Naive thymus-derived CD8-positive, alpha-beta T cell (primary cell): ENCODE measurements at regions of chr17 and their contacts with region 1.

Region 1: DNA sequence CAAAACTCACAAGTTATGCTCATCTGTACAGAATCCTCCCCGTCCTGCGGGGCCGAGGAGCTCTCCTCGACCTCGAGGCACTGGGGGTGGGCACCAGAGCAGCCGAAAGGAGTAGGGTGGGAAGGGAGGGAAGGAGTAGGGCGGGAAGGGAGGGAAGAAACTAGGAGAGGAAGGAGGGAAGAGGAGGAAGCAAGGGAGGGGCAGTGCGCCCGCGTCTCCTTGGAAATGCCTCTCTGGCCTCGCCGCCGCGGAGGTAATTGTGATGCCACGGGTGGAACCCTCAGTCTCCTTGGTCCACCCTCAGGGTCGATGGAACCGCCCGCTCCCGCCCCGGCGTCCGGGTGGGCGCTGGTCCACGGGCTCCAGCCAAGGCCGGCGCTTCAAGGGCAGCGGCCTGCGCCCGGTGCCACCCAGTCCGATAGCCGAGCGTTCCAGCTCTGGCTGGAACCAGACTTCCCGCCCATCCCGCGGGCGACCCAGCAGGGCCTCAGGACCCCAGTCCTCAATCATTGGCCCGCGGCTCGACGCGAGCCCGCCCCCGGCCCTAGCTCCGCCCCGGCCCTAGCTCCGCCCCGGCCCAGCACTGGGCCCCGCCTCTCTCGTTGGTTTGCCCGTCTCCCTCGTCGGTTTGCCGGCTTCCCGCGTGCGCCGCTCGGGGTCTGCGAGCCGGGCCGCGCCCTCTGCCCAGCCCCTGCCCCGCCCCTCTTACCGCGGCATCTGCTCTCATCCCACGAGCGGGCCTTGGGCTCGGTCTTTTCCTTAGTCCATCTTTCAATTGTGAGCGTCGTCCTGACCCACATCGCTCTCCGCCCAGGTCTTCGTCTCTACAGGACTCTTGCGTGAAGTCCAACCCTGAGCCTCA is 596 bp downstream of the PROCA1 start:
- DNase-seq: peak; percentile 82 to 92 (median 88)
- ATAC-seq: peak; percentile 88 to 89
- H3K4me3 Mint-ChIP-seq: peak overlapping the region; percentile 84 to 95 (median 92)
- H3K27ac Mint-ChIP-seq: peak overlapping the region; percentile 85 to 97 (median 95)
- H3K4me1 Mint-ChIP-seq: peaks cover 3 to 20% (median 15%) of the 10 kb centered on the region in 4 donors
- H3K27me3 Mint-ChIP-seq: peaks cover 0 to 18% (median 10%) of the 10 kb centered on the region in 5 donors

Region 2: GRCh38 chr17:28661635-28662537 is 49.2 kb before region 1 on chr17 and contains the starts of genes SDF2 and SUPT6H:
- POLR2A ChIA-PET with region 1: interaction called, 20 read pairs
- DNase-seq: peak; percentile 86 to 98 (median 94)
- ATAC-seq: peak; percentile 88 to 89
- H3K4me3 Mint-ChIP-seq: peak within 1 kb of the TSS; percentile 94 to 100 (median 100)
- H3K27ac Mint-ChIP-seq: peak within 1 kb of the TSS; percentile 99 to 100 (median 100)
- H3K4me1 Mint-ChIP-seq: peaks cover 30 to 70% (median 65%) of the 10 kb centered on the region in 4 donors
- H3K27me3 Mint-ChIP-seq: no peaks in the 10 kb centered on the region
- polyA plus RNA-seq, gene SDF2: 55.8 to 76.3 (median 59.0) TPM
- polyA plus RNA-seq, gene SUPT6H: 7.4 to 22.0 (median 10.0) TPM

Region 3: GRCh38 chr17:28737316-28737715 is 26.2 kb after region 1 on chr17:
- POLR2A ChIA-PET with region 1: no interaction called
- DNase-seq: no peak
- ATAC-seq: no peak
- H3K4me3 Mint-ChIP-seq: no peak overlapping the region
- H3K27ac Mint-ChIP-seq: no peak overlapping the region
- H3K4me1 Mint-ChIP-seq: peaks cover 8 to 46% (median 19%) of the 10 kb centered on the region in 4 donors
- H3K27me3 Mint-ChIP-seq: no peaks in the 10 kb centered on the region